Naive thymus-derived CD4-positive, alpha-beta T cell (primary cell): ENCODE measurements at regions of chr1 and their contacts with region 1.

Region 1: GRCh38 chr1:92485381-92486257 is 1.1 kb downstream of the GFI1 start:
- DNase-seq: peak; percentile 60 to 89 (median 74)
- ATAC-seq: peak; percentile 77
- H3K4me3 ChIP-seq: peak overlapping the region; percentile 83
- H3K4me3 Mint-ChIP-seq: peak overlapping the region; percentile 91 to 99 (median 94)
- H3K27ac ChIP-seq: peak overlapping the region; percentile 67
- H3K27ac Mint-ChIP-seq: peak overlapping the region; percentile 85 to 93 (median 90)
- H3K4me1 ChIP-seq: peaks cover 14 to 15% of the 10 kb centered on the region in 2 donors
- H3K4me1 Mint-ChIP-seq: peaks cover 26 to 45% (median 37%) of the 10 kb centered on the region in 7 donors
- H3K27me3 ChIP-seq: no peaks in the 10 kb centered on the region
- H3K27me3 Mint-ChIP-seq: peaks cover 0 to 3% (median 0%) of the 10 kb centered on the region in 5 donors

Region 2: DNA sequence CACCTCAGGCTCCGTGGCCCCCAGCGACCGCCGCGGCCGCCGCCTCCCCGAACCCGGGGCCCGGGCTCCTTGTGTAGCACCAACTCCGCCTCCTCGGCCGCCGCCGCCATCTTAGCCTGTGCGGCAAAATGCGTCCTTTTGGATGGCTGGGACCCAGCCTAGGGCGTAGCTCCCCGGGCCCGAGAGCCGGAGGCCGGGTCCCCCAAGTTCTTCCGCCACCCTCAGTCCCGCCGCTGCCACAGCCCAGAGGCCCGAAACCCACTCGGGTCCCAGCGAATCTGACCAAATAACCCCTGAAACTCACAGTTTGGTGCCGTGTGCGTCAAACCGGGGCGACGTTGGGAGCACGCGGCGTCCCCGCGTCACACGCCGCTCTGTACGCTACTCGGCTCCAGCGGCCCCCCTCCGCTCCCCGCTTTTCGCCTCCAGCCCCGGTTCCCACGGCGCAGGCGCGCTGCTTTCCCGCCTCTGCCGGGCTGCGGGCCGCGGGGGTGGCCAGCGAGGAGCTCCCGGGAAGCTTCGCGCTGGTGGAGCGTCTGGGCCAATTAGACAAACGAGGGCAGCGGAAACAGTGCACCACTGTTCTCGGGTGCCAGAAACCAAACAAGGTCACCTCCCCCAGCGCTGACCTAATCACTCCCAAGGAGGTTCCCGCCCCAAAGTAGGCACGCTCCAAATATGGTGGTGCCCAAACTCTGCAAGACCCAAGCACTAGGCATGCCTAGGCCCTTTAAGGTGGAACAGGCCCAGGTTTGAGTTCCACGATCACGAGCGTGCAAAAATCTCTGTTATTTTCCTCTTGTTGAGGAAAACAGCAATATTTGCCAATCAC is 1463.7 kb before region 1 on chr1 and contains the start of gene ZNF644:
- CTCF ChIA-PET with region 1: no interaction called
- POLR2A ChIA-PET with region 1: no interaction called
- intact Hi-C with region 1: loop called in 1 of 2 experiments (anchors 5 kb)
- DNase-seq: peak; percentile 81 to 95 (median 93)
- ATAC-seq: peak; percentile 91
- H3K4me3 ChIP-seq: peak within 1 kb of the TSS; percentile 62
- H3K4me3 Mint-ChIP-seq: peak within 1 kb of the TSS; percentile 90 to 97 (median 96)
- H3K27ac ChIP-seq: peak within 1 kb of the TSS; percentile 99
- H3K27ac Mint-ChIP-seq: peak within 1 kb of the TSS; percentile 95 to 100 (median 98)
- H3K4me1 ChIP-seq: peaks cover 37 to 45% of the 10 kb centered on the region in 2 donors
- H3K4me1 Mint-ChIP-seq: peaks cover 37 to 83% (median 68%) of the 10 kb centered on the region in 7 donors
- H3K27me3 ChIP-seq: no peaks in the 10 kb centered on the region
- H3K27me3 Mint-ChIP-seq: peaks cover 0 to 2% (median 0%) of the 10 kb centered on the region in 5 donors
- total RNA-seq, gene ZNF644: 63.5 to 117 (median 85.2) TPM

Region 3: DNA sequence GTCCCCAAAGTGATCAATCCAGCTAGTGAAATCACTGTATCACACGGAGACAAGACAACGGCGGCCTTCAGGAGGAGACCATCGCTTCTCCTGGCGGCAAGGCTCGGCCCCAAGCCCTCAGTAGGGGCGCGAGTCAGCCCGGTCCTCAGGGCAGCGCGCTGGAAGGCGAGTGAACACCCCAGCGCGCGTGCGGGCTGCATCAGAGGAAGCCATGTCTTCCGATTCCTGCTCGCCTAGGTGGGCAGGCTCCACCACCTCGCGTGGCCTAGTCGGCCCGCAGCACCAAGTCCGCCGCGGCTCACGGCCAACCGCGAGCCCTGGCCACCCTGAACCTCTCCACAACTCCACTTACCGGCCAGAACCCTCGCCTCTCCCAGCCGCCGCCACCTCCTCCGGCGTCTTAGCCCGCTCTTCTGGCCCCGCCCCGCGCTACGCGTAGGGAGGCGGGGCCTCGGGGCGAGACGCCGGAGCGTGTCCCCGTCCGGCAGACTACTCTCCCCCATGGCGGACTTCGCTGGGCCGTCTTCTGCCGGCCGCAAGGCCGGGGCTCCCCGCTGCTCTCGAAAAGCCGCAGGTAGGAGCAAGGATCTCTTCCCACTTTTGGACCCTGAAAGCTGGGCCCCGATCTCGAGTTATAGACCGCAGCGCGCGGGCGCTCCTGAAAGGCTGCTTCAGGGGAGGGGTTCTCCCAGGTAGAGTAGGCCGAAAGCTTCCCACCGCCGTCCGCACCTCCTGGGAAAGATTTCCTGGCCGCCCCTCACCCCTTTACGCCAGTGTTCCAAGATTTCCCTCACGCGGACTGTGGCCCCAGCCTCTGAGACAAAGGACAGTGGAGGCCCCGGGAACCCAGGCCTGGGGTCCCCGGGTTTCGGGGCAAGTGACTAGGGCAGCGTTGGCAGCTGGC is 186.8 kb before region 1 on chr1 and contains the starts of genes GLMN and RPAP2:
- CTCF ChIA-PET with region 1: interaction called, 4 read pairs
- POLR2A ChIA-PET with region 1: no interaction called
- intact Hi-C with region 1: loop called (anchors 1 to 2 kb)
- DNase-seq: peak; percentile 55 to 86 (median 75)
- ATAC-seq: peak; percentile 97
- H3K4me3 ChIP-seq: peak within 1 kb of the TSS; percentile 93
- H3K4me3 Mint-ChIP-seq: peak within 1 kb of the TSS; percentile 93 to 99 (median 97)
- H3K27ac ChIP-seq: peak within 1 kb of the TSS; percentile 98
- H3K27ac Mint-ChIP-seq: peak within 1 kb of the TSS; percentile 91 to 99 (median 97)
- H3K4me1 ChIP-seq: peaks cover 10 to 19% of the 10 kb centered on the region in 2 donors
- H3K4me1 Mint-ChIP-seq: peaks cover 30 to 61% (median 48%) of the 10 kb centered on the region in 7 donors
- H3K27me3 ChIP-seq: no peaks in the 10 kb centered on the region
- H3K27me3 Mint-ChIP-seq: no peaks in the 10 kb centered on the region
- total RNA-seq, gene GLMN: 13.9 to 27.0 (median 14.3) TPM
- total RNA-seq, gene RPAP2: 29.5 to 50.7 (median 42.3) TPM

Region 4: DNA sequence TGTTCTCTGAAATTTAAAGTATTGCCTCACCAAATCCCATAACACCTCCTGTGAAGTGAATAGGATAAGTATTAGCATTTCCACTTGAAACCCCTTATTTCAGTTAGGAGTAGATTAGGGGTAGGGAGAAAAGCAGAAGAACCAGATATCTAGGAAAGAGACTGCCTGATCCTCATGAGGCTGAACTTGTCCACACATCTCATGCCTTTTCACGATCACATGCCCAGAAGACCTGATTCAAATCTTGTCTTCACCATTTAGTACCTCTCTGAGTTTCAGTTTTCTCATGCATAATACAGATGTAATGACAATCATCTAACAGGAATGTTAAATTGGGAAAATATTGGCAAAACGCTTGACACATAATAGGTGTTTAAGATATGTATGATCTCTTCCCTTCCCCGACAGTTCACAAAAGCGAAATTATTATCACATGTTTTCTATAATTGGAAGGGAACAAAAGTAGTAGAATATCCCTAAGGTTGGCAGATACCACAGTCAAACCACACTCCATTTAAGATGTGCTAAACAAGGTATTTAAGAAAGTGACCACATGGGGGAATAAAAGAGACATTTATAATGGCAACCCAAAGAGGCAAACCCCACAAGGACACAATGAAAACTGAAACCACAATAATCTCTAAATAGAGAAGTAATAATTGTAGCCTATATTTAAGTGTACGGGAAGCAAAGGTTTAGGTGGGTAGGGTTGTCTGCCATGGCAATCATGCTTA is 24.1 kb before region 1 on chr1:
- CTCF ChIA-PET with region 1: interaction called, 3 read pairs
- POLR2A ChIA-PET with region 1: interaction called, 17 read pairs
- intact Hi-C with region 1: loop called (anchors 1 to 2 kb)
- DNase-seq: no peak
- ATAC-seq: peak; percentile 18
- H3K4me3 ChIP-seq: no peak overlapping the region
- H3K4me3 Mint-ChIP-seq: peak overlapping the region in 3 of 10 donors; percentile 8 to 49 (median 32)
- H3K27ac ChIP-seq: no peak overlapping the region
- H3K27ac Mint-ChIP-seq: peak overlapping the region in 1 of 9 donors; percentile 68
- H3K4me1 ChIP-seq: peaks cover 23 to 27% of the 10 kb centered on the region in 2 donors
- H3K4me1 Mint-ChIP-seq: peaks cover 30 to 63% (median 57%) of the 10 kb centered on the region in 7 donors
- H3K27me3 ChIP-seq: no peaks in the 10 kb centered on the region
- H3K27me3 Mint-ChIP-seq: no peaks in the 10 kb centered on the region

Region 5: DNA sequence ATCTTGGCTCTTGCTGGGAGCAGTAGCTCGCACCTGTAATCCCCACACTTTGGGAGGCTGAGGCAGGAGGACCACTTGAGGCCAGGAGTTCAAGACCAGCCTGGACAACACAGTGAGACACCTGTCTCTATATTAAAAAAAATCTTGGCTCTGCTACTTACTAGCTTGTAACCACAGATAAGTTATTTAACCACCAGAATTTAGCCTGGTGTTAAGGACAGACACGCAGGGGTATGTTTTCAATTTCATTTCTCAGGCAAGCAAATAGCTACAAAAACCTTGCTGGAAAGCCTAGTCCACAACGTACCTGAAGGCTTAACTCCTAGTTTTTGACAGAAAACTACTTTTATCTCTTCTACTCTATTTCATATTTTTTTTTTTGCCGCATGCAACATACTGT is 25.9 kb after region 1 on chr1:
- CTCF ChIA-PET with region 1: interaction called, 4 read pairs
- POLR2A ChIA-PET with region 1: no interaction called
- intact Hi-C with region 1: loop called in 1 of 2 experiments (anchors 2 kb)
- DNase-seq: no peak
- ATAC-seq: no peak
- H3K4me3 ChIP-seq: no peak overlapping the region
- H3K4me3 Mint-ChIP-seq: no peak overlapping the region
- H3K27ac ChIP-seq: no peak overlapping the region
- H3K27ac Mint-ChIP-seq: no peak overlapping the region
- H3K4me1 ChIP-seq: no peaks in the 10 kb centered on the region
- H3K4me1 Mint-ChIP-seq: peaks cover 0 to 37% (median 0%) of the 10 kb centered on the region in 7 donors
- H3K27me3 ChIP-seq: no peaks in the 10 kb centered on the region
- H3K27me3 Mint-ChIP-seq: no peaks in the 10 kb centered on the region

Region 6: DNA sequence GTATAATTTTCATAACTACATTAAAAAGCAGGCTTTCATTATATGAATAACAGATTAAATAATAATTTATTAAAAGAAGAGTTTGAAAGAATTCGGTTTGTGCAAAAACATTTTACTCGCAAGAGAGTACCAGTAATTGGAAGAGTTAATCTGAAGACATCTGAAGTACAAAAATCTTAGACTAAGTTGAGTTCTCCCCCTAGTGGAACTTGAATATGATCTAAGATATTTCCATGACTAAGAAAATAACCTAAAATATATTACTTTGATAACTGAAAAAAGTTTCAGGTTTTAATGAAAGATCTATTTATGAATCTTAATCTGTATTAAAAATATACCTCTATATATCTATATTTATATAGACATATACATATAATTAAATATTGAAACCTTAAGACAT is 113.6 kb after region 1 on chr1:
- CTCF ChIA-PET with region 1: interaction called, 26 read pairs
- POLR2A ChIA-PET with region 1: interaction called, 12 read pairs
- intact Hi-C with region 1: loop called (anchors 1 kb)
- DNase-seq: peak in 6 of 9 donors; percentile 19 to 61 (median 48)
- ATAC-seq: peak; percentile 59
- H3K4me3 ChIP-seq: no peak overlapping the region
- H3K4me3 Mint-ChIP-seq: no peak overlapping the region
- H3K27ac ChIP-seq: no peak overlapping the region
- H3K27ac Mint-ChIP-seq: no peak overlapping the region
- H3K4me1 ChIP-seq: no peaks in the 10 kb centered on the region
- H3K4me1 Mint-ChIP-seq: peaks cover 4 to 30% (median 9%) of the 10 kb centered on the region in 7 donors
- H3K27me3 ChIP-seq: no peaks in the 10 kb centered on the region
- H3K27me3 Mint-ChIP-seq: no peaks in the 10 kb centered on the region

Region 7: GRCh38 chr1:93179886-93180722 is 694.5 kb after region 1 on chr1 and contains the start of gene TMED5:
- CTCF ChIA-PET with region 1: no interaction called
- POLR2A ChIA-PET with region 1: no interaction called
- intact Hi-C with region 1: loop called in 1 of 2 experiments (anchors 5 kb)
- DNase-seq: peak; percentile 94 to 97 (median 96)
- ATAC-seq: peak; percentile 89
- H3K4me3 ChIP-seq: peak within 1 kb of the TSS; percentile 95
- H3K4me3 Mint-ChIP-seq: peak within 1 kb of the TSS; percentile 91 to 98 (median 94)
- H3K27ac ChIP-seq: peak within 1 kb of the TSS; percentile 91
- H3K27ac Mint-ChIP-seq: peak within 1 kb of the TSS; percentile 86 to 99 (median 97)
- H3K4me1 ChIP-seq: peaks cover 24 to 30% of the 10 kb centered on the region in 2 donors
- H3K4me1 Mint-ChIP-seq: peaks cover 30 to 59% (median 47%) of the 10 kb centered on the region in 7 donors
- H3K27me3 ChIP-seq: no peaks in the 10 kb centered on the region
- H3K27me3 Mint-ChIP-seq: no peaks in the 10 kb centered on the region
- total RNA-seq, gene TMED5: 37.8 to 60.0 (median 47.4) TPM